ENCODE measurements at regions of chr9 and their contacts with region 1.

Region 1: DNA sequence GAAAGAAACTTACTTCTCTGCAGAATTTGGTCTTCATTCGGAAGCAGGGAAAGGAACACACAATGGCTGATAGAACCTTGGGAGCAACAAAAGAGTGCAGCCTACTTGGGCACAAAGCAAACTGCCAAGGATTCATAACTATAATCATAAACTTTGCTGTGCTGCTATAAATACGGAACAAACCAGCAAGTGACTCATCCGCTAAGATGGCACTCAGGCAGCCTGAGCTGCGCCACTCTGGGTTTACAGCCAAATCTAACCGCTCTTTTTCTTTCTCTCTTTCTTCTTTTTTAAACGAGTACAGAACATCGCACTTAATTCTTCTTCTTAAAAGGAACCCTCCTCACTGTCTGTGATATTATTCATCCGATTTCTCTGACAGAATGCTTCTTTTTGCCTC is 81.1 kb downstream of the PTPN3 start:
- DNase-seq: no peak
- H3K4me3 ChIP-seq: no peak overlapping the region
- H3K27ac ChIP-seq: no peak overlapping the region
- H3K4me1 ChIP-seq: no peaks in the 10 kb centered on the region
- H3K27me3 ChIP-seq: no peaks in the 10 kb centered on the region
- CTCF ChIP-seq: no peak
- POLR2A ChIP-seq: no peak

Region 2: GRCh38 chr9:109401168-109401989 is 15.7 kb before region 1 on chr9:
- intact Hi-C with region 1: loop called (anchors 1 kb)
- DNase-seq: peak in 1 of 2 donors; percentile 70
- H3K4me3 ChIP-seq: no peak overlapping the region
- H3K27ac ChIP-seq: no peak overlapping the region
- H3K4me1 ChIP-seq: no peaks in the 10 kb centered on the region
- H3K27me3 ChIP-seq: no peaks in the 10 kb centered on the region
- CTCF ChIP-seq: peak; percentile 41 to 73 (median 57)
- POLR2A ChIP-seq: no peak